ENCODE measurements at regions of chr2 and their contacts with region 1.

Region 1: GRCh38 chr2:68039317-68039716 is 23.5 kb downstream of the C1D start:
- DNase-seq: no peak
- H3K4me3 Mint-ChIP-seq: no peak overlapping the region
- H3K27ac Mint-ChIP-seq: no peak overlapping the region
- H3K4me1 Mint-ChIP-seq: peaks cover 8% of the 10 kb centered on the region
- H3K27me3 Mint-ChIP-seq: no peaks in the 10 kb centered on the region
- CTCF ChIP-seq: no peak

Region 2: DNA sequence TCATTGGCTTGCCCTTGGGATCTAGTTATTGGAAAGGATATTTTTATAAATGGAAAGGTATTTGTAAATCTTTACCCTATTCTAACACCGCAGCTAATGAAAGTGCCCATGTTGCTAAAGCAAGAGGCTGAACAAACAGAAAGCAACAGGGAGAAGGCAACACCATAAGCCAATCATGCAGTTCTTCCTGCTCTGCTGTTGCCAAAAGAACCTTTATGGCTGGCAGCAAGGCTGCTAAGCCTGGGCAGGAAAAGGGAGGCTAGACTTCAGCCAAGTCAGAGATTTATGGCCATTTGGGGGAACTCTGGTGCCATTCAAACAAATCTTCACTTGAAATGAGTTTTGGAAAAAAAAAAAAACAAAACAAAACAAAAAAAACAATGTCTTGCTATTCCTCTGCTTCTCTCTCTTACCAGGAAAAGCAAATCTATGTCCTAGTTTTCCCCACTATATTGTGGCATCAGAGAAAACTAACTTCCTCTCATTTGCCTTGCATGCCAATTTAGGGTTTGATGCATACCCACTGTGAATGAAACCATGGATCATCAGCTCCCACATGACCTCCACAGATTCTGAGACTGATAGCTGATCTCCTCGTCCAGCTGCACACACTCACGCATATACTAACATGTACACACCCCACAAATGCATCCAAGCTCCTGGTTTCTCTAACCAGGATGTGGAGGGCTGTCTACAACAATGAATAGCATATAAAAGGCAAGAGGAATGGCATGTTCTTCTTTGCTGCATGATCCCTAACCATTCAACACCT is 155.8 kb before region 1 on chr2:
- CTCF ChIA-PET with region 1: no interaction called
- intact Hi-C with region 1: no loop called
- DNase-seq: no peak
- H3K4me3 Mint-ChIP-seq: no peak overlapping the region
- H3K27ac Mint-ChIP-seq: no peak overlapping the region
- H3K4me1 Mint-ChIP-seq: no peaks in the 10 kb centered on the region
- H3K27me3 Mint-ChIP-seq: no peaks in the 10 kb centered on the region
- CTCF ChIP-seq: no peak

Region 3: GRCh38 chr2:68521037-68521436 is 481.7 kb after region 1 on chr2:
- CTCF ChIA-PET with region 1: no interaction called
- intact Hi-C with region 1: loop called (anchors 5 kb)
- DNase-seq: no peak
- H3K4me3 Mint-ChIP-seq: no peak overlapping the region
- H3K27ac Mint-ChIP-seq: no peak overlapping the region
- H3K4me1 Mint-ChIP-seq: no peaks in the 10 kb centered on the region
- H3K27me3 Mint-ChIP-seq: no peaks in the 10 kb centered on the region
- CTCF ChIP-seq: no peak

Measured in Calu3 (cell line).